H1 (cell line): ENCODE measurements at regions of chr7 and their contacts with region 1.

Region 1: GRCh38 chr7:44534501-44534900 is 6.6 kb downstream of the NPC1L1 start:
- DNase-seq: peak; percentile 39 to 85
- H3K4me3 ChIP-seq: no peak overlapping the region
- H3K27ac ChIP-seq: no peak overlapping the region
- H3K4me1 ChIP-seq: no peaks in the 10 kb centered on the region
- H3K27me3 ChIP-seq: no peaks in the 10 kb centered on the region
- CTCF ChIP-seq: peak; percentile 83 to 97 (median 84)
- EP300 ChIP-seq: no peak
- POLR2A ChIP-seq: no peak
- RAD21 ChIP-seq: peak; percentile 56 to 69

Region 2: DNA sequence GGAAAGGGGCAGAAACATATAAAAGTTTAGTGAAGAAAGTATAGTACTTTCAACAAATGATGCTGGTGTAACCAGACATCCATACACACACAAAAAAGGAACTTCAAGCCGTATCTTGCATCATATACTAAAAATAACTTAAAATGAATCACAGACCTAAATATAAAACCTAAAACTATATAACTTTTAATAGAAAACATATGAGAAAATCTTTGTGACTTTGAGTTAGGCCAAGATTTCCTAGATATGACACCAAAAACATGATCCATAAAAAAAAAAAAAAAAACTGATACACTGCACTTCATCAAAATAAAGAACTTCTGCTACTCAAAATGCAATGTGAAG is 84.9 kb before region 1 on chr7:
- CTCF ChIA-PET with region 1: no interaction called
- POLR2A ChIA-PET with region 1: no interaction called
- DNase-seq: no peak
- H3K4me3 ChIP-seq: no peak overlapping the region
- H3K27ac ChIP-seq: no peak overlapping the region
- H3K4me1 ChIP-seq: peaks cover 0 to 10% (median 5%) of the 10 kb centered on the region in 4 experiments; a peak in 5 of 7 replicates
- H3K27me3 ChIP-seq: no peaks in the 10 kb centered on the region
- CTCF ChIP-seq: no peak
- EP300 ChIP-seq: no peak
- POLR2A ChIP-seq: no peak
- RAD21 ChIP-seq: no peak

Region 3: GRCh38 chr7:44515590-44516268 is 18.8 kb before region 1 on chr7:
- CTCF ChIA-PET with region 1: interaction called, 14 read pairs
- POLR2A ChIA-PET with region 1: no interaction called
- DNase-seq: no peak
- H3K4me3 ChIP-seq: no peak overlapping the region
- H3K27ac ChIP-seq: no peak overlapping the region
- H3K4me1 ChIP-seq: no peaks in the 10 kb centered on the region
- H3K27me3 ChIP-seq: no peaks in the 10 kb centered on the region
- CTCF ChIP-seq: no peak
- EP300 ChIP-seq: no peak
- POLR2A ChIP-seq: no peak
- RAD21 ChIP-seq: no peak

Region 4: GRCh38 chr7:44521347-44522095 is 13.0 kb before region 1 on chr7:
- CTCF ChIA-PET with region 1: interaction called, 22 read pairs
- POLR2A ChIA-PET with region 1: no interaction called
- DNase-seq: no peak
- H3K4me3 ChIP-seq: no peak overlapping the region
- H3K27ac ChIP-seq: no peak overlapping the region
- H3K4me1 ChIP-seq: no peaks in the 10 kb centered on the region
- H3K27me3 ChIP-seq: no peaks in the 10 kb centered on the region
- CTCF ChIP-seq: no peak
- EP300 ChIP-seq: no peak
- POLR2A ChIP-seq: no peak
- RAD21 ChIP-seq: no peak

Region 5: DNA sequence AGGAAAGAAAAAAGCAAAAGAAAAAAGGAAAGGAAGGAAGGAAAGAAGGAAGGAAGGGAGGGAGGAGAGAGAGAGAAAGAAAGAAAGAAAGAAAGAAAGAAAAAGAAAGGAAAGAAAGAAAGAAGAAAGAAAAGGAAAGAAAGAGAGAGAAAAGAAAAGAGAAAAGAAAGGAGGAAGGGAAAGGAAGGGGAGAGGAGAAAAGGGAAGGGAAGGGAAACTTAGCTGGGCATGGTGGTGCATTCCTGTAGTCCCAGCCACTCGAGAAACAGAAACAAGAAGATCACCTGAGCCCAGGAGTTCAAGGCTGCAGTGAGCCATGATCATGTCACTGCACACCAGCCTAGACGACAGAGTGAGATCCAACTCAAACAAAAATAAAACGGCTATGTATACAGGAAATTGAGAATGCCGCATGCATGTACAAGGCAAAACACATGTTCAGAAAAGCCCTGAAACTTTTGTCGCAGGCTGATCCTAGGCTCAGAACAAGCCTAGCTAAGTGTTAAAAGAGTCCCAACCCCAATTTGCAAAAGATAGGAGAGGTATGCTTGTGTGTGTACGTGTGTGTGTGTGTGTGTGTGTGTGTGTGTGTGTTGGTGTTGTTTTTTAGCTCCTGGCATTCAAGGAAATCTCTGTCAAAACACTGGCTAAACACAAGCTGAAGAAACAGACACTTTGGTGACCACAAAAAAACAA is 13.2 kb after region 1 on chr7:
- CTCF ChIA-PET with region 1: interaction called, 56 read pairs
- POLR2A ChIA-PET with region 1: interaction called, 3 read pairs
- DNase-seq: no peak
- H3K4me3 ChIP-seq: no peak overlapping the region
- H3K27ac ChIP-seq: no peak overlapping the region
- H3K4me1 ChIP-seq: no peaks in the 10 kb centered on the region
- H3K27me3 ChIP-seq: no peaks in the 10 kb centered on the region
- CTCF ChIP-seq: no peak
- EP300 ChIP-seq: no peak
- POLR2A ChIP-seq: no peak
- RAD21 ChIP-seq: no peak